Activated B cell treated with CpG ODN at 0.5 μM for 24 hours (primary cell): ENCODE measurements at regions of chr9 and their contacts with region 1.

Region 1: DNA sequence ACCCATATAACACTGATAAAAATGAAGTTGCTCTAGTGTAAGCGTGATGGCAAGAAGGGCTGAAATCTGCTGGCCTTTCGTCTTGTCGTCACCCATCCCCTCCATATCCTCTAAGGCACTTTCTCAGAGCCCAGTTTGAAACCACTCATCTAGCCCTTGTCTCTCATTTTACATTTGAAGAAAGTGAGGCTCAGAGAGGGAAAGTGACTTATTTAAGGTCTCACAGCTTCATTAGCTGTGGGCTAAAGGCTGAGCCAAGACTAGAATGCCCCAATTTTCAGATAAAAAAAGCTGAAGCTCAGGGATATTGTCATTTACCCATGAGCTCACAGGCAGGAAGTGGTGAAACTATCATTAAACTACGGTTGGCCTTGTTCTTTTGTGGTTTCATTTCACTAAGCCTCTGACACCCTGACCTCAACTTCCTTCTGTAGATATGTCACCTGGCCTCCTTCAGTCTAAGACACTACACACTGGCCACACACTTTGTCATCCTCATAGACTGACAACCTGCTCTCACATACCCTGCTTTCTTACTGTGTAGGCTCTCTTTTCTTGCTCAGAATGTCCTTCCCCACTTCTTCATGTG is 176.7 kb upstream of the DMAC1 start:
- DNase-seq: no peak
- ATAC-seq: peak; percentile 90
- H3K4me3 Mint-ChIP-seq: peak overlapping the region; percentile 55
- H3K27ac Mint-ChIP-seq: peak overlapping the region; percentile 85
- H3K4me1 Mint-ChIP-seq: peaks cover 77% of the 10 kb centered on the region
- H3K27me3 Mint-ChIP-seq: no peaks in the 10 kb centered on the region
- CTCF ChIP-seq: no peak

Region 2: DNA sequence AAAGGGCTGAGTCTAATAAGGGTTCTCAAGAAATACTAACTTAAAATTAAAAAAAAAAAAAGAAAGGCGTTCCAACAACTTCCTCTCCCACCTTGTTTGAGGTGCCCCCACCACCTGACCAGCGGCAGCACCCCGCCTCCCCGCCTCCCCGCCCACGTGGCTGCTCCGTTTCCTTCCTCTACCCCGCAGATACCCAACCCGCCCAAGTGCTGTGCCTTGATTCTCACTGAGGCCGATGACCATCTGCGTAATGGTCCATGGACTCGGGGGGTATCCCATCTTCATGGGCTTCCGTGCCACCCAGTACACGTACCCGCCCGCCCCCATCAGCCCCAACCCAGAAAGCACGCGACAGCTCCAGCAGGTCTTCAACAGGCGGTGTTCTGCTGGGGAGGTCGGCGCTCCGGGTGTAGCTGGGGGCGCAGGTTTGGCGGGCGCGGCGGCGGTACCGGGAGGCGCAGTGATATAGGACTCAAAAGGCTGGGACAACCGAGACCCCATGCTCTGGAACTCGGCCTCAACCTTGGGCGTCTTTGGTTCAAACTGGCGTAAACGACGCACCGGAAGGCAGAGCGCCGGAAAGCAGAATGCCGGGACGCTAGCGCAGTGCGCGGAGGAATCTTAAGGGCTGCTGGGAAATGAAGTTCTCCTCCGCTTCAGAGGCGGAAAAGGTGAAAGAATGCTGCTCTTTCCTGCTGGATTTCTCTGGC is 176.9 kb before region 1 on chr9 and contains the start of gene DMAC1:
- CTCF ChIA-PET with region 1: no interaction called
- POLR2A ChIA-PET with region 1: no interaction called
- intact Hi-C with region 1: loop called (anchors 1 kb)
- DNase-seq: peak; percentile 59
- ATAC-seq: peak; percentile 93
- H3K4me3 Mint-ChIP-seq: peak within 1 kb of the TSS; percentile 91
- H3K27ac Mint-ChIP-seq: peak within 1 kb of the TSS; percentile 96
- H3K4me1 Mint-ChIP-seq: peaks cover 20% of the 10 kb centered on the region
- H3K27me3 Mint-ChIP-seq: no peaks in the 10 kb centered on the region
- CTCF ChIP-seq: no peak
- total RNA-seq, gene DMAC1: 35.3 and 44.0 TPM in 2 replicates

Region 3: GRCh38 chr9:7844242-7844641 is 132.0 kb before region 1 on chr9:
- CTCF ChIA-PET with region 1: no interaction called
- POLR2A ChIA-PET with region 1: no interaction called
- intact Hi-C with region 1: loop called (anchors 2 kb)
- DNase-seq: no peak
- ATAC-seq: no peak
- H3K4me3 Mint-ChIP-seq: no peak overlapping the region
- H3K27ac Mint-ChIP-seq: no peak overlapping the region
- H3K4me1 Mint-ChIP-seq: peaks cover 5% of the 10 kb centered on the region
- H3K27me3 Mint-ChIP-seq: no peaks in the 10 kb centered on the region
- CTCF ChIP-seq: no peak

Region 4: GRCh38 chr9:7935681-7936080 is 40.6 kb before region 1 on chr9:
- CTCF ChIA-PET with region 1: no interaction called
- POLR2A ChIA-PET with region 1: no interaction called
- intact Hi-C with region 1: loop called (anchors 1 kb)
- DNase-seq: no peak
- ATAC-seq: peak; percentile 90
- H3K4me3 Mint-ChIP-seq: peak overlapping the region; percentile 62
- H3K27ac Mint-ChIP-seq: peak overlapping the region; percentile 90
- H3K4me1 Mint-ChIP-seq: peaks cover 20% of the 10 kb centered on the region
- H3K27me3 Mint-ChIP-seq: no peaks in the 10 kb centered on the region
- CTCF ChIP-seq: no peak

Region 5: GRCh38 chr9:7961076-7961475 is 15.2 kb before region 1 on chr9:
- CTCF ChIA-PET with region 1: no interaction called
- POLR2A ChIA-PET with region 1: no interaction called
- intact Hi-C with region 1: loop called (anchors 2 kb)
- DNase-seq: no peak
- ATAC-seq: no peak
- H3K4me3 Mint-ChIP-seq: no peak overlapping the region
- H3K27ac Mint-ChIP-seq: no peak overlapping the region
- H3K4me1 Mint-ChIP-seq: no peaks in the 10 kb centered on the region
- H3K27me3 Mint-ChIP-seq: no peaks in the 10 kb centered on the region
- CTCF ChIP-seq: no peak